ENCODE measurements at regions of chr4 and their contacts with region 1.

Region 1: DNA sequence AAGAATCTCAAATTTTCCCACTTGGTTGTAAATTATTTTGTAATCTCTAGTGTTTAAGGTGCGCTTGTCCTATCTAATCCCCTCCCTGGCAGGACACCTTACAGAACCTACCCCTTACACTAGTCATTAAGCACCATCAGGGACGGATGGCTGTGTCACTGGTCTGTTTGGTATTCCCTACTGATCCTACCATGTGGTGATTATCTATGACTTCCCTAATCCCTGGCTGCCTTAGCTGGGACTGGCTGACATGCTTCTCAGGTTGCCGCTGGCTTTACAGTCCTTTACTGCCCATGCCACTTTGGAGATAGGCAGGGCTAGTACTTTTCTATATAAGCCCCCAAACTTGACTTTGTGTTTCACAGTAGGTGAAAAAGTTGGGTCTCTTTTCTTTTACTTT is 58.6 kb downstream of the ELOVL6 start:
- H3K4me3 Mint-ChIP-seq: no peak overlapping the region
- H3K27ac Mint-ChIP-seq: no peak overlapping the region
- H3K4me1 Mint-ChIP-seq: peaks cover 18% of the 10 kb centered on the region
- H3K27me3 Mint-ChIP-seq: peaks cover 8% of the 10 kb centered on the region

Region 2: GRCh38 chr4:110055158-110055768 is 84.6 kb before region 1 on chr4:
- intact Hi-C with region 1: loop called (anchors 5 kb)
- H3K4me3 Mint-ChIP-seq: no peak overlapping the region
- H3K27ac Mint-ChIP-seq: no peak overlapping the region
- H3K4me1 Mint-ChIP-seq: peaks cover 12% of the 10 kb centered on the region
- H3K27me3 Mint-ChIP-seq: peaks cover 87% of the 10 kb centered on the region

Region 3: DNA sequence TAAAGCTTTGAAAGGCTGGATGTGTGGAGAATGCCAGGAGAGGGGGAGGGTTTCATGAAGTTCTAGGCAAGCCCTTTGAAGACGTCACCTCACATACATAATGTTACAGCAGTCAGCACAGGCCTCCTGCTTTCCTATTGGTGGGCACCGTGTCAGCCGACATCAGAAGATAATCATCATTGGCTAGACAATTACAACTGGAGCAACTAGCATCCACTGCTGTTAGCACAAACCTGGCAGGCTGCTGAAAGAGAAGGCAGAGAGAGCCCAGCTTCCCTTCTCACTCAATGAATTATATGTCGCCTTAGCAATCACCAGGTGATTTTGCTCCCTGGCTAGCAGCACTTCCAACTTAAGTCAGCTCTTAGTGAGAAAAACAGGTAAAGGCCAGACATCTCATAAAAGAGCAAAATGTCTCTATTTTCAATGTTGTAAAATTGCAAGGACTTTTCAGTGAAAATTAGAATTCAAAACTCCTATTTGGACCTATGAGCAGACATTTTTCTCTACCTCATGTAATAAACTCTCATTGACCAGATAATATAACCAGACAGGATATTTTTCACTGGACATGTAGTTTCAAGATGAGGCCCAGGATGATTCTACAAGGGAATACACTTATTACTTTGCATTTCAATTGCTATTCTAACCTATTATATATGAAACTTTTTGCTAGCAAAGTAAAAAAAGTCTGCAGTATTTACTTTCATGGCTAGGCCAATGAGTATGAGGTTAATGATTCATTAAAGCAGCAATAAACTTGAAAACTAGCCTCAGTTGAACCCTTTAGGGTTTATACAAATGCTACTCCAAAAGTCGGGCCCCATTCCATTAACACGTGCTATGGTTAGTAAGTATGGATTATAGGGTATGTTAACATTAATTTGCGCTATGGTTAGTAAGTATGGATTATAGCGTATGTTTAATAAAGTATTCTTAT is 54.3 kb after region 1 on chr4:
- intact Hi-C with region 1: no loop called
- H3K4me3 Mint-ChIP-seq: no peak overlapping the region
- H3K27ac Mint-ChIP-seq: no peak overlapping the region
- H3K4me1 Mint-ChIP-seq: peaks cover 27% of the 10 kb centered on the region
- H3K27me3 Mint-ChIP-seq: peaks cover 30% of the 10 kb centered on the region

Measured in dendritic cell treated with granulocyte-macrophage colony-stimulating factor and Interleukin-4, amounts not matched to agents 40 ng/mL and 50 ng/mL, for 4 days (primary cell).